ENCODE measurements at regions of chr18 and their contacts with region 1.

Region 1: DNA sequence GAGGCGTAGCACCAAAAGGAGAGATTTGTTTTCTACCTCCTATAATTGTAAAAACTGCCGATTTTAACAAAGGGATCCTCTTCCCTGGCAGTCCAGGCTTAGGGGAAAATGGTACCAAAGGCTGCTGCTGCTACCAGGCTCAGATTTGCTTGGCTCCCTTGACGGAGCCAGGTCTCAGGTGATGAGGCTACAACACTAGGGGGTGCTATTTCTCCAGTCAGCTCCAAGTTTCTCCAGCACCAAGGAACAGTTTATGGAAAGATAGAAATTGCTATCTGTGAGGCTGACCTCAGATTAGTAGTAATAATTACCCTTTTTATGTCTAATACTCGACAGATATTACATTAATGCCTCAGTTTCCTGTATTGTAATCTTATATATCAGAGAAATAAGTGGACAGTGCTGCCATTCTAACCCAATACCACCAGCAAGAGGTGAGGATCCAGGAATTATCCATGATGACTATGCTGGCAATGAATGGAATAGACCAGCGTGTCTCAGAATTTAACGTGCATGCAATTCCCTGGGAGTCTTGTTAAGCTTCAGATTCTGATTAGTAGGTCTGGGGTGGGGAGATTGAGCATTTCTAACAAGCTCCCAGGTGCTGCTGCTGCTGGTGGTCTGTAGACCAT is 111.3 kb downstream of the ESCO1 start:
- DNase-seq: no peak
- ATAC-seq: peak; percentile 90
- H3K4me3 ChIP-seq: no peak overlapping the region
- H3K27ac ChIP-seq: no peak overlapping the region
- H3K4me1 ChIP-seq: no peaks in the 10 kb centered on the region
- H3K27me3 ChIP-seq: no peaks in the 10 kb centered on the region
- CTCF ChIP-seq: peak; percentile 73 to 76 (median 75)
- EP300 ChIP-seq: no peak
- POLR2A ChIP-seq: no peak
- RAD21 ChIP-seq: peak; percentile 73

Region 2: DNA sequence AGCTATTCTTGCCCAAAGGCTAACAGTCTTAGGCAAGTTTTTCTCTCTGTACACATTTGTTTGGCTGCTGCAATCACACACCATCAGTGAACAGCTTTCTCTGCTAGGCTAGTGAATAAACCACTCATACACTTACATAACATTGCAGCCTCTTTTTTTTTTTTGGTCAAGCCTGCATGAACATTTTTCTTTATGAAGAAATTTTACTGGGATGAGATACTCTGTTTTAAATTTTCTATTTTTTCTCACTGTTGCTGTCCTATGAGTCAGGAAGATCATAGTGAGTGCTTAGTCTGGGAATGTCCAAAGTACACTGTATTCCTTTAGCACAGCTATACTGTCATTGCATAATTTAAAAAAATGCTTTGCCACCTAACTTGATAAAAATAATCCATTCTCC is 436.1 kb before region 1 on chr18:
- CTCF ChIA-PET with region 1: no interaction called
- POLR2A ChIA-PET with region 1: no interaction called
- RAD21 ChIA-PET with region 1: no interaction called
- SMC1A ChIA-PET with region 1: no interaction called
- in situ Hi-C with region 1: no loop called
- intact Hi-C with region 1: no loop called
- DNase-seq: no peak
- ATAC-seq: no peak
- H3K4me3 ChIP-seq: no peak overlapping the region
- H3K27ac ChIP-seq: no peak overlapping the region
- H3K4me1 ChIP-seq: no peaks in the 10 kb centered on the region; the same call in 1 of the 2 replicates
- H3K27me3 ChIP-seq: no peaks in the 10 kb centered on the region
- CTCF ChIP-seq: no peak
- EP300 ChIP-seq: no peak
- POLR2A ChIP-seq: no peak
- RAD21 ChIP-seq: no peak

Region 3: GRCh38 chr18:21439446-21439846 is 49.8 kb before region 1 on chr18:
- CTCF ChIA-PET with region 1: no interaction called
- POLR2A ChIA-PET with region 1: no interaction called
- RAD21 ChIA-PET with region 1: no interaction called
- SMC1A ChIA-PET with region 1: no interaction called
- in situ Hi-C with region 1: no loop called
- intact Hi-C with region 1: loop called (anchors 10 kb)
- DNase-seq: no peak
- ATAC-seq: no peak
- H3K4me3 ChIP-seq: no peak overlapping the region
- H3K27ac ChIP-seq: no peak overlapping the region
- H3K4me1 ChIP-seq: no peaks in the 10 kb centered on the region
- H3K27me3 ChIP-seq: no peaks in the 10 kb centered on the region; a peak in 1 of 4 replicates
- CTCF ChIP-seq: no peak
- EP300 ChIP-seq: no peak
- POLR2A ChIP-seq: no peak
- RAD21 ChIP-seq: no peak

Region 4: GRCh38 chr18:21513292-21513691 is 24.1 kb after region 1 on chr18:
- CTCF ChIA-PET with region 1: interaction called, 16 read pairs
- POLR2A ChIA-PET with region 1: no interaction called
- RAD21 ChIA-PET with region 1: no interaction called
- SMC1A ChIA-PET with region 1: no interaction called
- in situ Hi-C with region 1: no loop called
- intact Hi-C with region 1: no loop called
- DNase-seq: no peak
- ATAC-seq: no peak
- H3K4me3 ChIP-seq: no peak overlapping the region
- H3K27ac ChIP-seq: no peak overlapping the region
- H3K4me1 ChIP-seq: no peaks in the 10 kb centered on the region
- H3K27me3 ChIP-seq: no peaks in the 10 kb centered on the region
- CTCF ChIP-seq: no peak
- EP300 ChIP-seq: no peak
- POLR2A ChIP-seq: no peak
- RAD21 ChIP-seq: no peak

Region 5: DNA sequence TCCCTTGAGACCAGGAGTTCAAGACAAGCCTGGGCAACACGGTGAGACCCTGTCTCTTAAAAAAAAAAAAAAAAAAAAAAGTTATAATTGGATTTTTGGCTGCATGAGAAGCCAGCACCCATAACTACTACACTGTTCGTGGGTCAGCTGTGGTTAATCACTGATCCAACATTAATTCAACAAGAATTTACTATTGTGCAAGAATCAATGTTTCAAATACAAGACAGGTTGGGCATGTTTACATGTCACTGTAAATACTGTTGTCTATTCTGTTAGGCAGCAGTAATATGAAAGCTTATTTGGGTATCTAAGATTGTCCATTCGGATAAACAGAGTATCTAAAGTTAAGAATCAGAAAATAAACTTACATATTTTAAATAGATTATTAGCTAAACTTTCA is 49.0 kb after region 1 on chr18:
- CTCF ChIA-PET with region 1: interaction called, 5 read pairs
- POLR2A ChIA-PET with region 1: no interaction called
- RAD21 ChIA-PET with region 1: no interaction called
- SMC1A ChIA-PET with region 1: no interaction called
- in situ Hi-C with region 1: no loop called
- intact Hi-C with region 1: loop called (anchors 10 kb)
- DNase-seq: no peak
- ATAC-seq: no peak
- H3K4me3 ChIP-seq: no peak overlapping the region
- H3K27ac ChIP-seq: no peak overlapping the region
- H3K4me1 ChIP-seq: no peaks in the 10 kb centered on the region
- H3K27me3 ChIP-seq: no peaks in the 10 kb centered on the region
- CTCF ChIP-seq: no peak
- EP300 ChIP-seq: no peak
- POLR2A ChIP-seq: no peak
- RAD21 ChIP-seq: no peak

Region 6: GRCh38 chr18:21663578-21663977 is 174.3 kb after region 1 on chr18:
- CTCF ChIA-PET with region 1: no interaction called
- POLR2A ChIA-PET with region 1: no interaction called
- RAD21 ChIA-PET with region 1: no interaction called
- SMC1A ChIA-PET with region 1: no interaction called
- in situ Hi-C with region 1: no loop called
- intact Hi-C with region 1: no loop called
- DNase-seq: no peak
- ATAC-seq: no peak
- H3K4me3 ChIP-seq: no peak overlapping the region
- H3K27ac ChIP-seq: no peak overlapping the region
- H3K4me1 ChIP-seq: no peaks in the 10 kb centered on the region; the same call in 1 of the 2 replicates
- H3K27me3 ChIP-seq: no peaks in the 10 kb centered on the region
- CTCF ChIP-seq: no peak
- EP300 ChIP-seq: no peak
- POLR2A ChIP-seq: no peak
- RAD21 ChIP-seq: no peak

Region 7: GRCh38 chr18:21955757-21956652 is 466.8 kb after region 1 on chr18:
- CTCF ChIA-PET with region 1: interaction called, 5 read pairs
- POLR2A ChIA-PET with region 1: no interaction called
- RAD21 ChIA-PET with region 1: interaction called, 3 read pairs
- SMC1A ChIA-PET with region 1: no interaction called
- in situ Hi-C with region 1: loop called (anchors 5 kb)
- intact Hi-C with region 1: loop called (anchors 1 kb)
- DNase-seq: peak; percentile 4
- ATAC-seq: peak; percentile 100
- H3K4me3 ChIP-seq: no peak overlapping the region
- H3K27ac ChIP-seq: no peak overlapping the region
- H3K4me1 ChIP-seq: no peaks in the 10 kb centered on the region
- H3K27me3 ChIP-seq: no peaks in the 10 kb centered on the region
- CTCF ChIP-seq: peak; percentile 86 to 94 (median 92)
- EP300 ChIP-seq: no peak
- POLR2A ChIP-seq: no peak
- RAD21 ChIP-seq: peak; percentile 73